Heart right ventricle (tissue), 16 donors: ENCODE measurements at regions of chr3 and their contacts with region 1.

Region 1: DNA sequence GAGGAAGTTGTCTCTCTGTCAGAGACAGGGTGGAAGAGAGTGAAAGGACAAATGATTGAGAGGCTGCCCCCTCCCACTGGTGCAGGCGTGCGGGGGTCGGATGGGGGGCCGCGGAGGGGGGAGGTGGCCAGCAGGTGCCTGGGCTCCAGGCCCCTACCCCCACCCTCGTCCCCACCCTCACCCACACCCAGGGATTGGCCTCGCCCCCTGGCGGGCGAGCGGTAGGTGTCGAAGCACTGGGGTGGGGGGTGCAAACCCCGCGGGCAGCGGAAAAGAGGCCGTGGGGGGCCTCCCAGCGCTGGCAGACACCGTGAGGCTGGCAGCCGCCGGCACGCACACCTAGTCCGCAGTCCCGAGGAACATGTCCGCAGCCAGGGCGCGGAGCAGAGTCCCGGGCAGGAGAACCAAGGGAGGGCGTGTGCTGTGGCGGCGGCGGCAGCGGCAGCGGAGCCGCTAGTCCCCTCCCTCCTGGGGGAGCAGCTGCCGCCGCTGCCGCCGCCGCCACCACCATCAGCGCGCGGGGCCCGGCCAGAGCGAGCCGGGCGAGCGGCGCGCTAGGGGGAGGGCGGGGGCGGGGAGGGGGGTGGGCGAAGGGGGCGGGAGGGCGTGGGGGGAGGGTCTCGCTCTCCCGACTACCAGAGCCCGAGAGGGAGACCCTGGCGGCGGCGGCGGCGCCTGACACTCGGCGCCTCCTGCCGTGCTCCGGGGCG is at the start of gene KAT2B:
- DNase-seq: peak; percentile 82 to 84
- ATAC-seq: peak; percentile 66 to 89 (median 80)
- H3K4me3 ChIP-seq: peak within 1 kb of the TSS; percentile 53 to 95 (median 86)
- H3K27ac ChIP-seq: peak within 1 kb of the TSS; percentile 87 to 99 (median 98)
- H3K4me1 ChIP-seq: peaks cover 11 to 52% (median 45%) of the 10 kb centered on the region in 9 donors
- H3K27me3 ChIP-seq: no peaks in the 10 kb centered on the region
- CTCF ChIP-seq: peak; percentile 53 to 85 (median 72)
- total RNA-seq, gene KAT2B: 81.7 to 104 (median 87.8) TPM

Region 2: DNA sequence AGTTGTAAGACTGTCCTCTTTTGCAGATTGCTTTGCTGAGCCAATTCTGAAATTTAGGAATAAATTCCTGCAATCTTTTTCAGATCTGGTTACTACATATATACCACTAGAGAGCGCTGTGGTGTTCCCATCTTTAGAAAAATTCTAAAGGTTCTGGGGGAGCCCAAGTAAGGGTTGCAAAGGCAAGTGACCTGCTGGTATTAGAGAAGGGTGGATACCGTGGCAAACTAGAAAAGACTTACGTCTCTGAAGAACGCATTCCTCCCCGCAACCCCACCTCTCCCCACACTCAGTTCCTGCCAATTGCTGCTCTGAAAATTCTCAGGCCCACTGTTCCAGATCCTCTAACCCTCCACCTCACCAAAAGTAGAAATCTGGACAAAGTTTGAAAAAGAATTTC is 154.5 kb before region 1 on chr3:
- intact Hi-C with region 1: loop called in 4 of 10 experiments (anchors 5 kb)
- DNase-seq: peak in 1 of 2 donors; percentile 8
- ATAC-seq: no peak
- H3K4me3 ChIP-seq: no peak overlapping the region
- H3K27ac ChIP-seq: no peak overlapping the region
- H3K4me1 ChIP-seq: peaks cover 0 to 26% (median 13%) of the 10 kb centered on the region in 9 donors
- H3K27me3 ChIP-seq: no peaks in the 10 kb centered on the region
- CTCF ChIP-seq: peak; percentile 18 to 67 (median 56)

Region 3: DNA sequence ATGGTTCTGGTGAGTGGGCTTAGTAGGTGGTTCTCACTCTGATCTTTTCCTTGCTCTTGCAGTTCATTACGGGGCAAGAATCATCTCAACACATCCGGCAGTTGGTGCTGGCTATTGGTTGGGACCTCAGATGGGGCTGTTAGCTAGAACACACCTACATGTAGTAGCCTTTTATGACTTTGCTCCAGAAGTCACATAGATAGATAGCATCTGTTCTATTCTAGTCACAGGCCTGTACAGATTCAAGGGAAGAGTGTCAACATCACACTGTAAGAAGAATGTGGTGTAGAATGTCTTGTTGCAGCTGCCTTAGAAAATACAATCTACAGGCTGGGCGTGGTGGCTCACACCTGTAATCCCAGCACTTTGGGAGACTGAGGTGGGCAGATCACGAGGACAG is 78.0 kb before region 1 on chr3:
- intact Hi-C with region 1: loop called in 1 of 10 experiments (anchors 10 kb)
- DNase-seq: no peak
- ATAC-seq: peak in 7 of 8 donors; percentile 53 to 81 (median 71)
- H3K4me3 ChIP-seq: no peak overlapping the region
- H3K27ac ChIP-seq: no peak overlapping the region
- H3K4me1 ChIP-seq: peaks cover 0 to 47% (median 29%) of the 10 kb centered on the region in 9 donors
- H3K27me3 ChIP-seq: no peaks in the 10 kb centered on the region
- CTCF ChIP-seq: no peak

Region 4: GRCh38 chr3:20080956-20081554 is 41.1 kb after region 1 on chr3:
- intact Hi-C with region 1: loop called in 2 of 10 experiments (anchors 5 kb)
- DNase-seq: peak; percentile 80 to 86
- ATAC-seq: peak; percentile 95 to 100 (median 98)
- H3K4me3 ChIP-seq: no peak overlapping the region
- H3K27ac ChIP-seq: peak overlapping the region in 9 of 10 donors; percentile 14 to 79 (median 71)
- H3K4me1 ChIP-seq: peaks cover 2 to 31% (median 22%) of the 10 kb centered on the region in 9 donors
- H3K27me3 ChIP-seq: no peaks in the 10 kb centered on the region
- CTCF ChIP-seq: no peak

Region 5: GRCh38 chr3:20130106-20130505 is 90.2 kb after region 1 on chr3:
- intact Hi-C with region 1: loop called in 1 of 10 experiments (anchors 5 kb)
- DNase-seq: no peak
- ATAC-seq: peak in 2 of 8 donors; percentile 37 to 52
- H3K4me3 ChIP-seq: no peak overlapping the region
- H3K27ac ChIP-seq: peak overlapping the region in 1 of 10 donors; percentile 12
- H3K4me1 ChIP-seq: peaks cover 0 to 18% (median 4%) of the 10 kb centered on the region in 9 donors
- H3K27me3 ChIP-seq: no peaks in the 10 kb centered on the region
- CTCF ChIP-seq: peak in 4 of 9 donors; percentile 21 to 46 (median 39)